Sigmoid colon (tissue), 7 donors: ENCODE measurements at regions of chr20 and their contacts with region 1.

Region 1: GRCh38 chr20:59032023-59032712 is at the start of gene ATP5F1E:
- DNase-seq: peak; percentile 98
- H3K4me3 ChIP-seq: peak within 1 kb of the TSS; percentile 77 to 88 (median 82)
- H3K27ac ChIP-seq: peak within 1 kb of the TSS; percentile 88 to 94 (median 92)
- H3K4me1 ChIP-seq: peaks cover 0 to 51% (median 48%) of the 10 kb centered on the region in 4 donors
- H3K27me3 ChIP-seq: no peaks in the 10 kb centered on the region
- CTCF ChIP-seq: no peak
- EP300 ChIP-seq: no peak
- POLR2A ChIP-seq: peak; percentile 73 to 82
- total RNA-seq, gene ATP5F1E: 28.5 to 57.4 (median 40.1) TPM

Region 2: DNA sequence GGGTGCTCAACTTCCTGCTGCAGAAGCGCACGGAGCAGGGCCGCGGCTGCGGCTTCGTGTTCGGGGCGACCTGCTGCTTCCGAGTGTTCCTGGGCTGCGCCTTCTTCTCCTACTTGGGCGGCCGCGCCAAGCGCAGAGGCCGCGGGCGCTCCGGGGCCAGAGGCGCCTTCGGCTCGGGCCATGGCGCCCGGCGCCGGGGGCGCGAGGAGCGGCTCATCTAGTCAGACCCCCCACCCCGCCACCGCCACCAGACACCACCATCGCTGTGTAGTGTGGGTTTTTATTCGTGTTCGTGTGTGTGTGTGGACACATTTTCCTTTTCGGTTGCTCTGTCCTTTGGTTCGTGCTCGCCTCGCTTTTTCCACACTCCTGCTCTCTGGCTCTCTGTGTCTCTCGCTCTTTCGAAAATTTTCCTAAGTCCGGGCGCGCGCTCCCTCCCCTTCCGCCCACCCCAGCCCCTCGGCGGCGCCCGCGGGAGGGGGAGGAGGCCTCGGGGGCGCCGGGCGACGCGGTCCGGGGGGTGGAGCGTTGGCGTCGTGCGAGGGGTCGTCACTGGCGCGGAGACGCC is 141.6 kb before region 1 on chr20:
- intact Hi-C with region 1: loop called (anchors 2 kb)
- DNase-seq: peak; percentile 92
- H3K4me3 ChIP-seq: peak overlapping the region; percentile 40 to 93 (median 87)
- H3K27ac ChIP-seq: peak overlapping the region; percentile 98 to 100 (median 99)
- H3K4me1 ChIP-seq: peaks cover 0 to 40% (median 32%) of the 10 kb centered on the region in 4 donors
- H3K27me3 ChIP-seq: no peaks in the 10 kb centered on the region
- CTCF ChIP-seq: no peak
- EP300 ChIP-seq: no peak
- POLR2A ChIP-seq: peak in 1 of 2 donors; percentile 36

Region 3: GRCh38 chr20:59006864-59007664 is 25.1 kb before region 1 on chr20 and contains the start of gene CTSZ:
- intact Hi-C with region 1: loop called (anchors 2 kb)
- DNase-seq: peak; percentile 76
- H3K4me3 ChIP-seq: peak within 1 kb of the TSS; percentile 72 to 89 (median 79)
- H3K27ac ChIP-seq: peak within 1 kb of the TSS; percentile 83 to 89 (median 84)
- H3K4me1 ChIP-seq: peaks cover 0 to 50% (median 39%) of the 10 kb centered on the region in 4 donors
- H3K27me3 ChIP-seq: no peaks in the 10 kb centered on the region
- CTCF ChIP-seq: no peak
- EP300 ChIP-seq: no peak
- POLR2A ChIP-seq: no peak
- total RNA-seq, gene CTSZ: 93.9 to 144 (median 119) TPM

Region 4: DNA sequence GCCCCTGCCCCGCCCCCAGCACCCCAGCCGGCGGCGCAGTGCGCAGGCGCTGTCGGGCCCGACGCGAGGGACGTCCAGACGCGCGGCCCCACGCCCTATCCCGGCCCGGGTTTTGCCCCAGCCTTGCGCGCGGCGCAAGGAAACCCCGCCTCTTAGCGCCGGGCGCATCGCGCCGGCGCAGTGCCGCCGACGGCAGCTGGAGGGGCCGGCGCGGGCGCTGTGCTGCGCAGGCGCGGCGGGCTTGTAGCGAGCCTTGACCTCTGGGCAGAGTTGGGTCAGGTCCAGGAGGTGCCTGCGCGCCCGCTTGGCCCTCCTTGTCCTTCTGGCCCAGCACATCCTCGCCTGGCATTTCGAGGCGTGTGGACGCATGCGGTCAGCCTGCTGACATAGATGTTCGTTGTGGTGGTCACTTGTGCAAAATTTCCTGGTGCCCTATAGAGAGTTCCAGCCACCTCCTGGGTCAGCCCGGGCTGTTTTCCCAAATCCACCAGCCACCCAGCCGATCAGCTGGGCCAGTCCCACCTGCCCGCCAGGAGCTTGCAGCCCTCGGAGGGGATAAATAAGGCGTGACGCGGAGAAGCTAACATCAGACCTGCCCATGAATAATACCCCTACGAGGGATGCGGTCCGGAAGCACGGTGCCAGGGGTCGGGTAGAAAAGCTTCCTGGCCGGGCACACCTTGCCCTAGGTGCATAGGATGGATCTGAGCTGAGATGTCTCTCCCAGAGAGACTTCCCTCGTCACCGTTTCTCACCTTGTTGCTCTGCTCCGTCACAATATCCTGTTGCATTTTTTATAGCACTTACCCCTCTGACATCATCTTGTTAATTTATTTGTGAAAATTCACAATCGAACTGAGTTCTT is 10.9 kb after region 1 on chr20:
- intact Hi-C with region 1: loop called (anchors 1 kb)
- DNase-seq: peak; percentile 96
- H3K4me3 ChIP-seq: peak overlapping the region; percentile 73 to 94 (median 85)
- H3K27ac ChIP-seq: peak overlapping the region; percentile 81 to 86 (median 86)
- H3K4me1 ChIP-seq: peaks cover 0 to 39% (median 33%) of the 10 kb centered on the region in 4 donors
- H3K27me3 ChIP-seq: no peaks in the 10 kb centered on the region
- CTCF ChIP-seq: peak in 1 of 4 experiments; percentile 20
- EP300 ChIP-seq: no peak
- POLR2A ChIP-seq: no peak

Region 5: GRCh38 chr20:59120491-59120890 is 88.3 kb after region 1 on chr20:
- intact Hi-C with region 1: no loop called
- DNase-seq: no peak
- H3K4me3 ChIP-seq: no peak overlapping the region
- H3K27ac ChIP-seq: no peak overlapping the region
- H3K4me1 ChIP-seq: no peaks in the 10 kb centered on the region
- H3K27me3 ChIP-seq: no peaks in the 10 kb centered on the region
- CTCF ChIP-seq: no peak
- EP300 ChIP-seq: no peak
- POLR2A ChIP-seq: no peak